Right lobe of liver (tissue), 6 donors: ENCODE measurements at regions of chr20 and their contacts with region 1.

Region 1: DNA sequence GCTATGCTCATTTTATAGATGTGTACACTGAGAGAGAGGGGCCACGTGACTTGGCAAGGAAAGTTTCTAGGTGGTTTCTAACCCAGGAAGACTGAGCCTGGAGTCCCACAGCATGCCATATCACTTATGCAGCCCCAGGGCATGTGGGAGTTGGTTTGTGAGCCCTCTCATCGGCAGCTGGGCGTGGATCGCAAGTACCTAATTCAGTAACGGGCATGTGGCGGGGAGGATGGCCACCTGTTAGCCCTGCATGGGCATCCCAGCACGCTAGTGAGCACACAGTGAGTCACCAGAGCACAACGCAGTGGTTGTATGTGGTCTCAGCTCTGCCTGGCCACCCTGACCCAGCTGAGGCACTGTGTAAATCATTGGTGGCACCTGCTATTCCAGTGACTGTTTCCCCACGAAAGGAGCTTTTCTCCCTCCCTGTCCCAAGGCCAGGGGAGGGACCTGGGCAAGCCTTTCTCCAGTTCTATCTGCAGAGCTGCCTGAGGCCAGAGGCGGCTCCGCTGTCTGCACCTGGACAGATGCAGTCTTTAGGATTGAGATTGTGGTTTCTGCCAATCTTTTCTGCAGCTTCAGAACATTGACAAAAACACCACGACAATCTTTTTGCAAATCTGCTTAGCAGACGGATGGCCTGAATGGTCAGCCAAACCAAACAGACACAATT is 88.2 kb downstream of the NINL start:
- DNase-seq: no peak
- ATAC-seq: peak in 1 of 4 donors; percentile 39
- H3K4me3 ChIP-seq: no peak overlapping the region
- H3K27ac ChIP-seq: no peak overlapping the region
- H3K4me1 ChIP-seq: peaks cover 0 to 7% (median 0%) of the 10 kb centered on the region in 4 donors
- H3K27me3 ChIP-seq: no peaks in the 10 kb centered on the region
- CTCF ChIP-seq: no peak
- POLR2A ChIP-seq: no peak

Region 2: DNA sequence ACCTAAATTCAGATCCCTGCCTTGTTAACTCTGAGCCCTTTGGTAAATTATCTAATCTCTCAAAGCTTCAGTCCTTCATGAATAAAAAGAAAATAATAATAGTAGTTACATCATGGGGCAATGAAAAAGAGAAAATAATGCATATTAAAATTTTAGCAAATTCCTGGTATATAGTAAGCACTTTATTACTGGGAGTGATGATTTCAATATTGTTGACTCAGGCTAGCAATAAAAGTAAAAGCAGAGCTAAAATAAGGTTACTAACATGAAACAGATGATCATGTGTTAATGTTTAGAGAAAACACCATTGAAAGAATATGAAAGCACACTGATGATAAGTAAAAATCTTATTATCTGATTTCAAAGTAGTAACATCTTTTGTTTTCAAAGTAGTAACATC is 76.0 kb before region 1 on chr20:
- intact Hi-C with region 1: loop called in 1 of 2 experiments (anchors 10 kb)
- DNase-seq: no peak
- ATAC-seq: no peak
- H3K4me3 ChIP-seq: no peak overlapping the region
- H3K27ac ChIP-seq: no peak overlapping the region
- H3K4me1 ChIP-seq: no peaks in the 10 kb centered on the region
- H3K27me3 ChIP-seq: no peaks in the 10 kb centered on the region
- CTCF ChIP-seq: no peak
- POLR2A ChIP-seq: no peak

Region 3: DNA sequence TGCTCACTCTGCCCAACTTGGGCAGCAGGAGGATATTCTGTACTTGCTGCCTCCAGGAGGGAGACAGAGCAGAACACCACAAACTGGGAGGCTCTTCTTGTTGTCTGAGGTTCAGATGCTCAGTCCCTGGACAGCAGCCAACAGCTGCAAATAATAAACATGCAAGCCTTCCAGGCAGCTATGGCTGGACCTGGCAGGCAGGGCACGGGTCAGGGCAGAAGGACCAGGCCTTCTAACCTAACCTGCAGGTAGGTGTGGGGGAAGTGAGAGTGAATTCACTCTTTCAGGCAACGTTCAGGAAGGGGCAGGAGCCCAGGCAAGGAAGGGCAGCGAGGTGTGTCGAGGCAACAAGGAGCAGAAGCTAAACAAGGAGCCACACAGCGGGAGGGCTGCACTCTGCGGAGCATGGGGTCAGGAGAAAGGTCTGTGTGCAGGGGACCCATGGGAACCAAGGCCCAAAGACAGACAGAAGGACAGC is 56.8 kb after region 1 on chr20:
- intact Hi-C with region 1: no loop called
- DNase-seq: no peak
- ATAC-seq: peak in 2 of 4 donors; percentile 36 to 59
- H3K4me3 ChIP-seq: no peak overlapping the region
- H3K27ac ChIP-seq: no peak overlapping the region
- H3K4me1 ChIP-seq: peaks cover 0 to 10% (median 0%) of the 10 kb centered on the region in 4 donors
- H3K27me3 ChIP-seq: no peaks in the 10 kb centered on the region
- CTCF ChIP-seq: no peak
- POLR2A ChIP-seq: no peak

Region 4: DNA sequence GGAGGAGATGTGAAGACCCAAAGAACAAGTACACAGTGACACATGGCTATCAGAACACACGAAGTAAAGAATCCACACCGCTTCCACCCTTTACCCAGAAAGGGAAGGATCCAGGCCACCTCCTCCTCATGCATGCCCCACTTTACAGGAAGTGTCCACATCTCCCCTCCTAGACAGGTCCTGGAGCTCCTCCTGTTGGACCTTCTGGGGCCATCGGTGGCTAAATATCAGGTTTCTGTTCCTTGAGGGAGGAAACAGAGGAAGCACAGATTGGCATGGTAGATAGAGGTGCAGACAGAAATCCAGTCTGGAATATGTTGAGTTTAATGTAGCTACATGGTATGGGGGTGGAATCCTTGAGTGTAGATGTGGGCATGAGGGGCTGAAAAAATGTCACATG is 77.3 kb after region 1 on chr20:
- intact Hi-C with region 1: loop called in 1 of 2 experiments (anchors 10 kb)
- DNase-seq: no peak
- ATAC-seq: peak; percentile 23 to 64 (median 56)
- H3K4me3 ChIP-seq: no peak overlapping the region
- H3K27ac ChIP-seq: no peak overlapping the region
- H3K4me1 ChIP-seq: no peaks in the 10 kb centered on the region
- H3K27me3 ChIP-seq: no peaks in the 10 kb centered on the region
- CTCF ChIP-seq: peak in 1 of 4 donors; percentile 6
- POLR2A ChIP-seq: no peak